Transverse colon (tissue), 4 donors: ENCODE measurements at regions of chr18 and their contacts with region 1.

Region 1: GRCh38 chr18:37537868-37538525 is 27.6 kb downstream of the CELF4 start:
- DNase-seq: peak; percentile 60
- H3K4me3 ChIP-seq: no peak overlapping the region
- H3K27ac ChIP-seq: no peak overlapping the region
- H3K4me1 ChIP-seq: no peaks in the 10 kb centered on the region
- H3K27me3 ChIP-seq: peaks cover 30% of the 10 kb centered on the region
- CTCF ChIP-seq: peak; percentile 67 to 87 (median 79)
- EP300 ChIP-seq: no peak
- POLR2A ChIP-seq: no peak

Region 2: DNA sequence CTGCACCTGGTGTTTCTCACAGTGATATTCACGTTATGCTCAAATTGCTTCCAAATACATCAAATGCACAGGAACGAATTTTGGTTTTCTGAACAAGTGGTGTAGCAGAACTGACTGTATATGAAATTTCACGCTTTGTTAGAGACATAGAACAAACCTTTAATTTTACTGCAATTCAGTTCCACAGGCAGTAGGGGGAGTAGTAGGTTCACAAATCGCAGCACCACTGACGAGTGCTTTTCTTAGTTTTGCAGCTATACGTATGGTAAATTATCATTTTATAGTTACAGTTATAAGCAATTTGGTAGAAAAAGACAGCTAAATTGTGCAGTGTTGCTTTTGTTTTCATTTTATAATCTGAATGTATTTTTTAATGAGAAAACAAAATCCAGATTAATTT is 595.7 kb before region 1 on chr18:
- in situ Hi-C with region 1: loop called in 1 of 4 experiments (anchors 25 kb)
- intact Hi-C with region 1: no loop called
- DNase-seq: no peak
- H3K4me3 ChIP-seq: no peak overlapping the region
- H3K27ac ChIP-seq: no peak overlapping the region
- H3K4me1 ChIP-seq: no peaks in the 10 kb centered on the region
- H3K27me3 ChIP-seq: no peaks in the 10 kb centered on the region
- CTCF ChIP-seq: peak in 4 of 5 experiments; percentile 37 to 55 (median 46)
- EP300 ChIP-seq: no peak
- POLR2A ChIP-seq: no peak

Region 3: DNA sequence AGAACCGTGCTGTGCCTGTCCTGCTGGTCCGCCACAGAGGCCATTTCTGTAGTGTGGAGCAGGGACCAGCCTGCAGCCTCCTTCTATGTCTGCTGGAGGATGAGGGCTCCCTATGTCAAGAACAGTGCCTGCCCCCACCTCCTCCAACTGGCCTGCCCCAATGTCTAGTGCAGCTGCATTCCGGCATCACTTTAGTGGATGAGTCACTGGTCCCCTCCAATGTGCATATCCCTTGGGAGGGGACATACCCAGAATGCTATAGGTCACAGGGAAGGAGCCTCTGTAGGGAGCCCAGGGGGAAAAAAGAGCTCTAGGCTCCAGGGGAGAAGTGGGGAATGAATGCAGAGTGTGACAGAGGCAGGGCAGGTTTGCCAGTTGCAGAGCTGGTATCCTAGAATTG is 191.9 kb before region 1 on chr18:
- in situ Hi-C with region 1: loop called in 1 of 4 experiments (anchors 25 kb)
- intact Hi-C with region 1: loop called (anchors 10 kb)
- DNase-seq: no peak
- H3K4me3 ChIP-seq: no peak overlapping the region
- H3K27ac ChIP-seq: no peak overlapping the region
- H3K4me1 ChIP-seq: no peaks in the 10 kb centered on the region
- H3K27me3 ChIP-seq: peaks cover 6% of the 10 kb centered on the region
- CTCF ChIP-seq: no peak
- EP300 ChIP-seq: no peak
- POLR2A ChIP-seq: no peak

Region 4: DNA sequence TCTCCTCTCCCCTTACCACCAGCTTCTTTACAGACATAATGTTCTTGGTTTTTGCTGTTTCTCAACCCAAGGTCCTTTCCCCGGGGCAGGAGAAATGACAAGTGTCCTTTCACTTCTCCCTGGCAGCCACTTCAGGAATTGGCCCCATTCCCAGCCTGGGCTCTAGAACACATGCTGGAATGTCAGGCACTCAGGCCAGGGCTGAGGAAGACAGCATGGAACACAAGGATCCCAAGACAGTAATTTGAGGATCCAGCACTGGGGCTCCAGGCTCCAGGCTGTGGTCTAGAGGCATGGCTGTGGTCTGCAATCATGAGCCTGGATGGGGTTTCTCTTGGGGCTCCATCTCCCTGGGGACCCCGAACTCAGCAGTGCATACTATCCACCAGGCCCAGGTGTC is 173.8 kb before region 1 on chr18:
- in situ Hi-C with region 1: loop called in 1 of 4 experiments (anchors 25 kb)
- intact Hi-C with region 1: no loop called
- DNase-seq: no peak
- H3K4me3 ChIP-seq: no peak overlapping the region
- H3K27ac ChIP-seq: no peak overlapping the region
- H3K4me1 ChIP-seq: no peaks in the 10 kb centered on the region
- H3K27me3 ChIP-seq: peaks cover 23% of the 10 kb centered on the region
- CTCF ChIP-seq: no peak
- EP300 ChIP-seq: no peak
- POLR2A ChIP-seq: no peak

Region 5: DNA sequence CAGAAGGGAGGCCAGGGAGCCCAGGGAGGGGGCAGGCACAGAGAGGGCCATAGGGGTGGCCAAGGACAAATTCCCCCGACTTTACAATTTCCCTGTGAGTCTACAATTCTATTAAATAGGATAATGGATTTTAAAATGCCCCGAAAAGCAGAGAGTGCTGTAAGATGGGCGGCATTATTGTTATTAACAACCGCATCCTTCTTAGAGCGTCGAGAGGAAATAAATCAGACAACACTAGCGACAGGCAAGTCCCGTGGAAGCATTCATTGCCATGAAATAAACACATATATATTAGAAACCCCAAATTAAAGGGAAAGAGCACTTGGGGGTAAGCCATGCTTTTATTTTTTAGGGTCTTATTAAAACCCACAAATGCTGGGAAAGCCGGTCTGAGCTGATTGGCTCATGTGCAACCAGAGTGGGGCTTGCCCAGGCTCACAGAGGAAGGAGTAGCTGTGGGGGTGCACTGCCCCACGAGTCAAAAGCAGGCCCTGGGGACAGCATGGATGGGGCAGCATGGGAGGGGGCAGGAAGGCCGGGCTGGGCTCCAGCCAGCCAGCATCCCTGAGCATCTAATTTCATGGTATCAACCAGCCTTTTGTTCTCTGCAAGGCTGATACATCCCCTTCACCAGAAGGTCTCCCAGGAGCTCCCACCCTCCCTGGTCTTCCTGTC is 159.5 kb before region 1 on chr18:
- in situ Hi-C with region 1: loop called in 3 of 4 experiments (anchors 10 to 25 kb)
- intact Hi-C with region 1: no loop called
- DNase-seq: no peak
- H3K4me3 ChIP-seq: no peak overlapping the region
- H3K27ac ChIP-seq: no peak overlapping the region
- H3K4me1 ChIP-seq: no peaks in the 10 kb centered on the region
- H3K27me3 ChIP-seq: peaks cover 4% of the 10 kb centered on the region
- CTCF ChIP-seq: no peak
- EP300 ChIP-seq: no peak
- POLR2A ChIP-seq: no peak

Region 6: GRCh38 chr18:37393945-37394609 is 143.9 kb before region 1 on chr18:
- in situ Hi-C with region 1: loop called in 1 of 4 experiments (anchors 25 kb)
- intact Hi-C with region 1: no loop called
- DNase-seq: peak; percentile 32
- H3K4me3 ChIP-seq: peak overlapping the region; percentile 4 to 35 (median 20)
- H3K27ac ChIP-seq: no peak overlapping the region
- H3K4me1 ChIP-seq: peaks cover 0 to 5% (median 0%) of the 10 kb centered on the region in 4 donors
- H3K27me3 ChIP-seq: peaks cover 19% of the 10 kb centered on the region
- CTCF ChIP-seq: no peak
- EP300 ChIP-seq: no peak
- POLR2A ChIP-seq: no peak